ENCODE measurements at regions of chr6 and their contacts with region 1.

Region 1: GRCh38 chr6:10722820-10723566 is at the start of gene TMEM14C:
- DNase-seq: peak; percentile 95
- H3K4me3 ChIP-seq: peak within 1 kb of the TSS; percentile 65
- CTCF ChIP-seq: no peak

Region 2: GRCh38 chr6:10000541-10000940 is 722.5 kb before region 1 on chr6:
- CTCF ChIA-PET with region 1: no interaction called
- POLR2A ChIA-PET with region 1: no interaction called
- DNase-seq: no peak
- H3K4me3 ChIP-seq: no peak overlapping the region
- CTCF ChIP-seq: no peak

Region 3: GRCh38 chr6:10694302-10695085 is 28.5 kb before region 1 on chr6 and contains the starts of genes C6orf52 and PAK1IP1:
- CTCF ChIA-PET with region 1: interaction called, 4 read pairs
- POLR2A ChIA-PET with region 1: interaction called, 20 read pairs
- DNase-seq: peak; percentile 55
- H3K4me3 ChIP-seq: peak within 1 kb of the TSS; percentile 99
- CTCF ChIP-seq: no peak

Region 4: DNA sequence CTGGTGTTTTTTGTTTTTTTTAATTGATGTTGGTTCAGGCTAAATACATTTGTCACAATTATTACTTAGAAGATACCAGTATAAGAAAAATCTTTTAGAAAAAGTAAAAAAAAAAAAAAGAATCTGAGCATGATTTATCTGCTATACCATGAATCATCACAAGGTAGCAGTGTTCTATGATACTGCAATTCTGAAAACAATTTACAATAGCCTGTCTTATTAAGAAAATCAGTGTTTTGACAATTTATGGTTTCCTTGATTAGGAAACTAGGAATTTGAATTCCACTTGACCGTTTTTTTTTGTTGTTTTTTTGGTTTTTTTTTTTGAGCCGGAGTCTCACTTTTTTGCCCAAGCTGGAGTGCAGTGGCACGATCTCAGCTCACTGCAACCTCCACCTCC is 124.7 kb after region 1 on chr6:
- CTCF ChIA-PET with region 1: no interaction called
- POLR2A ChIA-PET with region 1: no interaction called
- DNase-seq: no peak
- H3K4me3 ChIP-seq: no peak overlapping the region
- CTCF ChIP-seq: no peak

Measured in AG04449 (cell line).